ENCODE measurements at regions of chr12 and their contacts with region 1.

Region 1: GRCh38 chr12:118164798-118165486 is 29.0 kb downstream of the PEBP1 start:
- DNase-seq: peak; percentile 40
- H3K4me3 Mint-ChIP-seq: no peak overlapping the region
- H3K27ac Mint-ChIP-seq: no peak overlapping the region
- H3K4me1 Mint-ChIP-seq: no peaks in the 10 kb centered on the region
- H3K27me3 Mint-ChIP-seq: no peaks in the 10 kb centered on the region
- CTCF ChIP-seq: peak; percentile 59

Region 2: GRCh38 chr12:117818400-117818799 is 346.5 kb before region 1 on chr12:
- CTCF ChIA-PET with region 1: no interaction called
- POLR2A ChIA-PET with region 1: no interaction called
- intact Hi-C with region 1: no loop called
- DNase-seq: no peak
- H3K4me3 Mint-ChIP-seq: no peak overlapping the region
- H3K27ac Mint-ChIP-seq: peak overlapping the region; percentile 37
- H3K4me1 Mint-ChIP-seq: peaks cover 18% of the 10 kb centered on the region
- H3K27me3 Mint-ChIP-seq: no peaks in the 10 kb centered on the region
- CTCF ChIP-seq: no peak

Region 3: GRCh38 chr12:118061011-118061875 is 103.7 kb before region 1 on chr12 and contains the start of gene WSB2:
- CTCF ChIA-PET with region 1: no interaction called
- POLR2A ChIA-PET with region 1: no interaction called
- intact Hi-C with region 1: no loop called
- DNase-seq: no peak
- H3K4me3 Mint-ChIP-seq: peak within 1 kb of the TSS; percentile 89
- H3K27ac Mint-ChIP-seq: peak within 1 kb of the TSS; percentile 93
- H3K4me1 Mint-ChIP-seq: peaks cover 21% of the 10 kb centered on the region
- H3K27me3 Mint-ChIP-seq: no peaks in the 10 kb centered on the region
- CTCF ChIP-seq: no peak
- total RNA-seq, gene WSB2: 55.9 and 99.8 TPM in 2 replicates

Region 4: DNA sequence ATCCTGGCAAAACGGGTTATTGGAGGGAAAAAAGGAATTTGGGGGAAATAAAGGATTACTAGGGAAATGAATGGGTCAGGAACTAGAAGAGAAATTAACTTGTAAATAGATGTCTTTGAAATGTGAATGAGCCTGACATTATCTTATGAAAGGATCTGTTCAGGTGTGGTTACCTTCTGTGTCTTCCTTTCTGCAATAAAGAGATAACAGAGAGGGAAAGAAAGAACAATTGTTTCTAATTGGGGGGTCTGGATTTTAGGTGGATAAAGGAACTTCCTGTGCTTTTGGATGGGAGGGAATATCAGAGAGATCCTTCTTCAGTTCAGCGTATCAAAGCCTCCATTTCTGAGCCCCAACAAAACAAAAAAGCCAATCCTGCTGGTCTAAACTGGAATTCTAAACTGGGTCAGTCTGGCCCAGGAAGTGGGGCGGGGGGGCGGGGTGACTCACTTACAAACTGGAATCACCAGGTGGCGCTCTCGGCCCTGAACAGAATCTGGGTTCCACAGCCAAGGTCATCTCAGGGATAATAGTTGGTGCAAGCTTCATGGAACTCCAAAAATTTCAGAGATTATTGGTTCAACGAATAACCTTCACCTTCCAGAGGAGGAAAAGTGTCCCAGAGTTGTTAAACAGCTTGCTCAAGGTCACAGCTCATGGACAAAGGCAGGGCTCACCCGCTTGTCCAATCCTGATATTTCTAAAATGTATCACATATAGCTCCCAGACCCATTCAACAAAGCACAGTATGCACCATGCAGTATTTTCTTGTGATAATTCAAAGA is 44.2 kb before region 1 on chr12:
- CTCF ChIA-PET with region 1: interaction called, 18 read pairs
- POLR2A ChIA-PET with region 1: no interaction called
- intact Hi-C with region 1: no loop called
- DNase-seq: peak; percentile 78
- H3K4me3 Mint-ChIP-seq: no peak overlapping the region
- H3K27ac Mint-ChIP-seq: peak overlapping the region; percentile 32
- H3K4me1 Mint-ChIP-seq: peaks cover 5% of the 10 kb centered on the region
- H3K27me3 Mint-ChIP-seq: no peaks in the 10 kb centered on the region
- CTCF ChIP-seq: peak; percentile 78

Region 5: DNA sequence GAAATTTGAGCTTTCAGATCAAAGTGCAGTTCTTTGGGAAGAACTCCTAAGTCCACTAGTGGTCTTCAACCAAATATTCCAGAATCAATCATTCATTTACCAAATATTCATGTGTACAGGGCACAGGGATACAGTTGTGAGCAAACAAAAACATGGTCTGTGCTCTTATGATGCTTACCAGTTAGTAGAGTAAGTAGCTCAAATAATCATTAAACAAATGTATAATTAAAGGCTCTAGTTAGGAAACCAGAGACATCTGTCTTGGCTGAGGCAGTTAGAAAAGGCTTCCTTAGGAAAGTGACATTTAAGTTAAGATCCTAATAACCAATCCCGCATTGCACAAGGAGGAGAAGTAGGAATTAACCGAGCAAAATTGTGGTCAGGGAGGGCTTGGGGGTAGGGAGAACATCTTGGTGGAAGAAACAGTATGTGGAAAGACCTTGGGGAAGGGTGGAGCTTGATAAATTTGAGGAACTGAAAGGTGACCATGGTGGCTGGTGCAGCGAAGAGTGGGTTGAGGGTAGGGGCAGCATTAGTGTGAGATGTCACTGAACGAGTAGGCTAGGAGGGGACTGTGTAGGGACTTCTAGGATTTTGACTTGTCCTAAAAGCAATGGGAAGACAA is 11.0 kb after region 1 on chr12:
- CTCF ChIA-PET with region 1: interaction called, 76 read pairs
- POLR2A ChIA-PET with region 1: no interaction called
- intact Hi-C with region 1: no loop called
- DNase-seq: no peak
- H3K4me3 Mint-ChIP-seq: no peak overlapping the region
- H3K27ac Mint-ChIP-seq: no peak overlapping the region
- H3K4me1 Mint-ChIP-seq: no peaks in the 10 kb centered on the region
- H3K27me3 Mint-ChIP-seq: no peaks in the 10 kb centered on the region
- CTCF ChIP-seq: no peak

Region 6: GRCh38 chr12:118183705-118184104 is 18.8 kb after region 1 on chr12:
- CTCF ChIA-PET with region 1: interaction called, 76 read pairs
- POLR2A ChIA-PET with region 1: no interaction called
- intact Hi-C with region 1: no loop called
- DNase-seq: peak; percentile 9
- H3K4me3 Mint-ChIP-seq: no peak overlapping the region
- H3K27ac Mint-ChIP-seq: no peak overlapping the region
- H3K4me1 Mint-ChIP-seq: peaks cover 21% of the 10 kb centered on the region
- H3K27me3 Mint-ChIP-seq: no peaks in the 10 kb centered on the region
- CTCF ChIP-seq: no peak